ENCODE measurements at regions of chr1 and their contacts with region 1.

Region 1: GRCh38 chr1:224329842-224330753 is at the start of gene NVL:
- DNase-seq: peak; percentile 89
- H3K4me3 ChIP-seq: peak within 1 kb of the TSS; percentile 68 to 76
- H3K27ac ChIP-seq: peak within 1 kb of the TSS; percentile 83 to 92
- H3K4me1 ChIP-seq: peaks cover 10% of the 10 kb centered on the region
- H3K27me3 ChIP-seq: no peaks in the 10 kb centered on the region
- CTCF ChIP-seq: peak in 3 of 4 experiments; percentile 8 to 20 (median 10)
- POLR2A ChIP-seq: peak; percentile 20
- total RNA-seq, gene NVL: 23.9 to 29.7 TPM

Region 2: DNA sequence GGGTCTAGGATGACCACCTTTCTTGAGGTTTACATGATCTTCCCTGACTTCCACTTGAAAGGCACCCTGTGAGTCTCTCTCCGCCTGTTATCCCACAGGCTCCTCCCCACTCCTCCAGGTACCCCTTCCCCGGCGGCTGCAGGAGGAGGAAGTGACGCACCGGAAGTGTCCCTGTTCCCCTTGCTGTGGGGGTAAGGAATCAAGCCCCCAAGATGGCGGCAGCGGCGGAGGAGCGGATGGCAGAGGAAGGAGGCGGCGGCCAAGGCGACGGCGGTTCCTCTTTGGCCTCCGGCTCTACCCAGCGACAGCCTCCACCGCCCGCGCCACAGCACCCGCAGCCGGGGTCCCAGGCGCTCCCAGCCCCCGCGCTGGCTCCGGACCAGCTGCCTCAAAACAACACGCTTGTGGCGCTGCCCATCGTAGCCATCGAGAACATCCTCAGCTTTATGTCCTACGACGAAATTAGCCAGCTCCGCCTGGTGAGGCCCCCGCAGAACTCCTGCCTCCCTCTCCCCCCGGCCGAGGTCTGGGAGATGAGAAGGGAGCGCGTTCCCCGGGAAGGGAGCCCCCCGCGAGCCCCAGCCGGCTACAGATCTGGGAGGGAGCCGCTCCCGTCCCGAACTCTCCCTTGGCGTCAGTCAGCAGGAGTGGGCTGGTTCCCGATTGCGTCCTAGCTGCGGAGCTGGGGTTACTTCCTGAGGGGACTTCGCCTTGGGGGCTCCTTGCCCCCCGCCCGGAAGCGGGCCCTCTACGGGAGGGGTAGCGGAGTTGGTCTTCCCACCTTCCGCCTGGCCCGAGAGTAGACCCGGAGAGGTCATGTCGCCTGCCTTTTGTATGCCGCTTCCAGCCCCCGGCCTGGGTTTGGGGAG is 215.9 kb before region 1 on chr1 and contains the start of gene FBXO28:
- intact Hi-C with region 1: loop called (anchors 1 kb)
- DNase-seq: peak; percentile 95
- H3K4me3 ChIP-seq: peak within 1 kb of the TSS; percentile 79 to 96
- H3K27ac ChIP-seq: peak within 1 kb of the TSS; percentile 95 to 97
- H3K4me1 ChIP-seq: peaks cover 4% of the 10 kb centered on the region
- H3K27me3 ChIP-seq: no peaks in the 10 kb centered on the region
- CTCF ChIP-seq: no peak
- POLR2A ChIP-seq: peak; percentile 92
- total RNA-seq, gene FBXO28: 29.0 to 40.0 TPM

Region 3: GRCh38 chr1:224182866-224183590 is 147.1 kb before region 1 on chr1 and contains the start of gene DEGS1:
- intact Hi-C with region 1: loop called (anchors 10 kb)
- DNase-seq: peak; percentile 79
- H3K4me3 ChIP-seq: peak within 1 kb of the TSS; percentile 92 to 99
- H3K27ac ChIP-seq: peak within 1 kb of the TSS; percentile 94 to 98
- H3K4me1 ChIP-seq: peaks cover 3% of the 10 kb centered on the region
- H3K27me3 ChIP-seq: no peaks in the 10 kb centered on the region
- CTCF ChIP-seq: peak in 2 of 4 experiments; percentile 12 to 32
- POLR2A ChIP-seq: peak; percentile 98
- total RNA-seq, gene DEGS1: 78.8 to 172 TPM